Naive thymus-derived CD4-positive, alpha-beta T cell (primary cell): ENCODE measurements at regions of chr9 and their contacts with region 1.

Region 1: DNA sequence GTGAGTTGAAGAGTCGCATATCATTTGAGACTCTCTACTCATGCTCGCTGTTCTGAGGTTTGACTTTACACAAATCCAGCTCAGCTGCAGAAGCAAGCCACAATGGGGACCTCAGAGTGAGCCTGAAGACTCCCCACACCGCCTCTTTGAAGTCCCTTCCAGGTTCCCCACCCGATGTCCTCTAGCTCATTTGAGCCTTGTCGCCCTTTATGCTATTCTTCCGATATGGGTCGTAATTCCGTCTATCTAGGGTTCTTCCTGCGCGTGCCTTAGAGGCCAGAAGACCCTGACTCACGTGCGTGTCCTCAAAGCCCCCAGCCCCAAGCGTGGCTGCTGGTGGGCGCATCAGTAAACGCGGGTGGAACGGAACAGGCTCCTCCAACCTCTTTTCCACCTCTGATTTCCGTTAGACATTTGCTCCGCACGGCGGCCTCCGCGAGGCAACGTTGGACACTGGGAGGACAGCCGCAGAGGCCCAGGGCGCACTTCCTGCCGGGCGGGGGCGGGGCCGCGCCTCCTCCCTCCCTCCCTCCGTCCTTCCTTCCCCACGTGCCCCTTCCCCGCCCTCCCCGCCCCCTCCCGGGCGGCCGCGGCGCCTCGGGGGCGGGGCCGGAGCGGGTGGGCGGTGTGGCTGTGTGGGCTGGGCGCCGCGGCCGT is at the start of gene SNX30:
- DNase-seq: peak; percentile 66 to 83 (median 75)
- ATAC-seq: peak; percentile 94
- H3K4me3 ChIP-seq: peak within 1 kb of the TSS; percentile 70
- H3K4me3 Mint-ChIP-seq: peak within 1 kb of the TSS; percentile 88 to 94 (median 92)
- H3K27ac ChIP-seq: peak within 1 kb of the TSS; percentile 68
- H3K27ac Mint-ChIP-seq: peak within 1 kb of the TSS; percentile 88 to 98 (median 96)
- H3K4me1 ChIP-seq: peaks cover 46% of the 10 kb centered on the region in 2 donors
- H3K4me1 Mint-ChIP-seq: peaks cover 39 to 66% (median 60%) of the 10 kb centered on the region in 7 donors
- H3K27me3 ChIP-seq: no peaks in the 10 kb centered on the region
- H3K27me3 Mint-ChIP-seq: peaks cover 0 to 4% (median 0%) of the 10 kb centered on the region in 5 donors
- total RNA-seq, gene SNX30: 6.6 to 15.8 (median 9.2) TPM

Region 2: DNA sequence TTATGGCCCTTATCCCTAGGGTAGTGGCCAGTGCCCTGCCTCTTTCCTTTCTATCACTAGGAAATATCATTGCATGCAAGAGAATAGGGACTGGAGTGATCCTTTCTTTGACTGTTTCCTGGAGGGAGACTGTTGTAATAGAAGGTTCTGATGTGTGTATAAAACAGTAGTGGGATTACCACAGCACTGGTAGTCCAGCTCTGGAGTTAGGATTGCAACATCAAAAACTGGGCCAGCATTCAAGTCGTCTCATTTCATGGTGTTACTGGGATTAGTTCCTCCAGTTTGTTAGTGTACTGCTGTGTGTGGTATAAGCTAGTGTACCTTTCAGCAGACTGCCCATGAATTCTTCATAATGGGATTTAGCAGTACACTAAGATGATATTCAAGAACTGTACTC is 217.8 kb before region 1 on chr9:
- CTCF ChIA-PET with region 1: no interaction called
- POLR2A ChIA-PET with region 1: no interaction called
- intact Hi-C with region 1: no loop called
- DNase-seq: no peak
- ATAC-seq: no peak
- H3K4me3 ChIP-seq: no peak overlapping the region
- H3K4me3 Mint-ChIP-seq: no peak overlapping the region
- H3K27ac ChIP-seq: no peak overlapping the region
- H3K27ac Mint-ChIP-seq: no peak overlapping the region
- H3K4me1 ChIP-seq: no peaks in the 10 kb centered on the region
- H3K4me1 Mint-ChIP-seq: peaks cover 0 to 17% (median 11%) of the 10 kb centered on the region in 7 donors
- H3K27me3 ChIP-seq: no peaks in the 10 kb centered on the region
- H3K27me3 Mint-ChIP-seq: no peaks in the 10 kb centered on the region

Region 3: GRCh38 chr9:112771359-112772214 is 21.3 kb after region 1 on chr9:
- CTCF ChIA-PET with region 1: no interaction called
- POLR2A ChIA-PET with region 1: interaction called, 4 read pairs
- intact Hi-C with region 1: loop called in 1 of 2 experiments (anchors 2 kb)
- DNase-seq: no peak
- ATAC-seq: peak; percentile 64
- H3K4me3 ChIP-seq: no peak overlapping the region
- H3K4me3 Mint-ChIP-seq: peak overlapping the region in 6 of 10 donors; percentile 8 to 54 (median 35)
- H3K27ac ChIP-seq: no peak overlapping the region
- H3K27ac Mint-ChIP-seq: peak overlapping the region in 7 of 9 donors; percentile 4 to 69 (median 56)
- H3K4me1 ChIP-seq: peaks cover 0 to 9% of the 10 kb centered on the region in 2 donors
- H3K4me1 Mint-ChIP-seq: peaks cover 27 to 56% (median 49%) of the 10 kb centered on the region in 7 donors
- H3K27me3 ChIP-seq: no peaks in the 10 kb centered on the region
- H3K27me3 Mint-ChIP-seq: peaks cover 0 to 9% (median 0%) of the 10 kb centered on the region in 5 donors

Region 4: DNA sequence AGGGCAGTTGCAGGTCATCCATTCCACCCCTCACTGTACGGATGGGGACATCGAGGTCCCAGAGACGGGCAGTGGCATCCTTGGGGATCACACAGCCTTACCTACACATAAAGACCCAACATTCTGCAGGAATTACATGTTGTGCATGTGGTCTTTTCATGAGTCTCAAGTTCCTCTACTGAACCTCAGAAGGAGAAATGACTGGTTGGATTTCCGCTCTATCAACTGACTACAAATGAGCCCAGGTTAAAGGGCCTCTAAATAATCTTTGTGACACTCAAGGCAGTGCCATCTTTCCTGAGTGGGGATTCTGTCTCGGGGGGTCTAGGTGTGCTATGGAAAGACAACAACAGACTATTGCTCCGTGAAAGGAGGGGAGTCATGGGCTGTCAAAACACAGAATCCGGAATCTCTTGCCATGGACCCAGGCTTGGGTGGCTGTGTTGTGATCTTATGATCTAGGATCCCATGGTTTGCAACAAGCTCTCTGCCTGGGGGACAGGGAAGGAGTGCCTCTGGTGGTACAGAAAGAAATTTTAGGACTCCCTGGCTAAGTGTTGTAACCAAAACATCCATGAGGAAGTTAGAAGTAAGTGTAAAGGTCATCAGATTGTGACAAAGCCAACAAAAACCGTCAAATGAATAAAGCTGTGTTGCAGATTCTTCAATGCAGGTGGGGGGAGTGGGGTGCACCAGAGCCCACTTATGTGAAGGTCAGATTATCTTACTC is 398.7 kb after region 1 on chr9:
- CTCF ChIA-PET with region 1: no interaction called
- POLR2A ChIA-PET with region 1: no interaction called
- intact Hi-C with region 1: no loop called
- DNase-seq: no peak
- ATAC-seq: no peak
- H3K4me3 ChIP-seq: no peak overlapping the region
- H3K4me3 Mint-ChIP-seq: peak overlapping the region in 4 of 10 donors; percentile 4 to 25 (median 12)
- H3K27ac ChIP-seq: no peak overlapping the region
- H3K27ac Mint-ChIP-seq: no peak overlapping the region
- H3K4me1 ChIP-seq: peaks cover 6 to 7% of the 10 kb centered on the region in 2 donors
- H3K4me1 Mint-ChIP-seq: peaks cover 12 to 26% (median 22%) of the 10 kb centered on the region in 7 donors
- H3K27me3 ChIP-seq: no peaks in the 10 kb centered on the region
- H3K27me3 Mint-ChIP-seq: peaks cover 14 to 23% (median 16%) of the 10 kb centered on the region in 5 donors